ENCODE measurements at regions of chr1 and their contacts with region 1.

Region 1: GRCh38 chr1:68378296-68379084 is 71.3 kb downstream of the RPE65 start:
- DNase-seq: peak in 1 of 2 experiments; percentile 42
- H3K4me3 ChIP-seq: no peak overlapping the region
- H3K27ac ChIP-seq: peak overlapping the region; percentile 22
- H3K4me1 ChIP-seq: peaks cover 14% of the 10 kb centered on the region
- H3K27me3 ChIP-seq: no peaks in the 10 kb centered on the region
- CTCF ChIP-seq: no peak

Region 2: GRCh38 chr1:67743072-67743725 is 635.3 kb before region 1 on chr1:
- CTCF ChIA-PET with region 1: no interaction called
- POLR2A ChIA-PET with region 1: interaction called, 12 read pairs
- intact Hi-C with region 1: no loop called
- DNase-seq: peak in 1 of 2 experiments; percentile 16
- H3K4me3 ChIP-seq: no peak overlapping the region
- H3K27ac ChIP-seq: no peak overlapping the region
- H3K4me1 ChIP-seq: peaks cover 7% of the 10 kb centered on the region
- H3K27me3 ChIP-seq: no peaks in the 10 kb centered on the region
- CTCF ChIP-seq: no peak

Measured in PC-9 (cell line).